ENCODE measurements at regions of chr13 and their contacts with region 1.

Region 1: GRCh38 chr13:20534038-20534608 is 8.5 kb upstream of the CRYL1 start:
- DNase-seq: no peak
- ATAC-seq: no peak
- H3K4me3 ChIP-seq: no peak overlapping the region
- H3K27ac ChIP-seq: no peak overlapping the region
- H3K4me1 ChIP-seq: no peaks in the 10 kb centered on the region
- H3K27me3 ChIP-seq: no peaks in the 10 kb centered on the region
- CTCF ChIP-seq: no peak

Region 2: GRCh38 chr13:20301403-20302071 is 232.6 kb before region 1 on chr13:
- CTCF ChIA-PET with region 1: no interaction called
- POLR2A ChIA-PET with region 1: no interaction called
- intact Hi-C with region 1: no loop called
- DNase-seq: no peak
- ATAC-seq: no peak
- H3K4me3 ChIP-seq: no peak overlapping the region
- H3K27ac ChIP-seq: no peak overlapping the region
- H3K4me1 ChIP-seq: no peaks in the 10 kb centered on the region
- H3K27me3 ChIP-seq: no peaks in the 10 kb centered on the region
- CTCF ChIP-seq: no peak

Region 3: GRCh38 chr13:20461481-20461859 is 72.7 kb before region 1 on chr13:
- CTCF ChIA-PET with region 1: no interaction called
- POLR2A ChIA-PET with region 1: no interaction called
- intact Hi-C with region 1: no loop called
- DNase-seq: peak; percentile 45
- ATAC-seq: peak; percentile 42
- H3K4me3 ChIP-seq: no peak overlapping the region
- H3K27ac ChIP-seq: no peak overlapping the region
- H3K4me1 ChIP-seq: peaks cover 30% of the 10 kb centered on the region
- H3K27me3 ChIP-seq: no peaks in the 10 kb centered on the region
- CTCF ChIP-seq: no peak

Region 4: DNA sequence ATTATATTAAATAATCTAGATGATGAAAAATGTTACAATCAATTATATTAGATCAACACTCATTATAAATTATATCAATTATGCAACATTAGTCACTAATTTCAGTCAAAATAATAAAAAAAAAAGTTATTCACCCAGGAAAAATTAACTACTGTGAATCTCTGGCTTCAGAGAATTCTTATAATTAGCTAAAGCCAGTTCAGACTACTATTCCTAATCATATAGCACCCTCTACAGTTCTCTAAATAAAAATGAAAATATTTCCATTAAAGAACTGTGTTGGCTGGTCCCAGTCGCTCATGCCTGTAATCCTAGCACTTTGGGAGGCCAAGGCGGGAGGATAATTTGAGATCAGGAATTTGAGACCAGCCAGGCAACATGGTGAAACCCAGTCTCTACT is 335.4 kb after region 1 on chr13:
- CTCF ChIA-PET with region 1: interaction called, 12 read pairs
- POLR2A ChIA-PET with region 1: no interaction called
- intact Hi-C with region 1: no loop called
- DNase-seq: peak; percentile 16
- ATAC-seq: peak; percentile 37
- H3K4me3 ChIP-seq: no peak overlapping the region
- H3K27ac ChIP-seq: no peak overlapping the region
- H3K4me1 ChIP-seq: peaks cover 13% of the 10 kb centered on the region
- H3K27me3 ChIP-seq: no peaks in the 10 kb centered on the region
- CTCF ChIP-seq: peak; percentile 42; the same call in 1 of the 2 replicates